Heart left ventricle (tissue), 16 donors: ENCODE measurements at regions of chr1 and their contacts with region 1.

Region 1: DNA sequence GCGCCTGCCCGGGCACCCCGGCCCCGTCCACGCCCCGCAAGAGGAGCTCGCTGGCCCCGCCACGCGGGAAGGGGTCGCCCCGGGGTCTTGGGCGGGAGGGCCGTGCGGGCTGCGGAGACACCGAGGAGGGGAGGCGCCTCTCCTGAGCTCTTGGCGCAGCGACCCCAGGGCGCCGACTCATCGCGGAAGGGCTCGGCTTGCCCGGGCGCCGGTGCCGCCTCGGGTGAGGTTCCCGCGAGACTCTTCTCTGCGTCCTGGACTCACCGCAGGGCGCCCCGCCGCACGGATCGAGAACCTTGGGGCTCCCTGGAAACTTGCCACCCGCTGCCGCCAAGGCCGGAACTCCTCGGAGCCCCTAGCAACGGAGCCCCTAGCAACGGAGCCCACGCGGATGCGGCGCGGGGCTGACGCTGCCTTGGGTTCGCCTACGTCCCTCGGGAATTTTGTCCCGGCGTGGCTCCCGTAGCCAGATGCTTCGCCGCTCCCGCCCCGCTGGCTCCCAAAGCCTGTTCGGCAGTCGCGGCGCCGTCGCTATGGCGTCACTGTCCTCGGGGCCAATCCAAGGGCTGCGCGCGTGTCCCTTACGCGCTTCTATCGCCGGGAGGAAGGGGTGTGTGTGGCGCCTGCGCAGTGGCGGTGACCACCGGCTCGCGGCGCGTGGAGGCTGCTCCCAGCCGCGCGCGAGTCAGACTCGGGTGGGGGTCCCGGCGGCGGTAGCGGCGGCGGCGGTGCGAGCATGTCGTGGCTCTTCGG is at the start of gene ATAD3A:
- DNase-seq: peak; percentile 99
- ATAC-seq: peak; percentile 96 to 99 (median 96)
- H3K4me3 ChIP-seq: peak within 1 kb of the TSS; percentile 59 to 99 (median 79)
- H3K27ac ChIP-seq: peak within 1 kb of the TSS; percentile 68 to 97 (median 88)
- H3K4me1 ChIP-seq: peaks cover 0 to 20% (median 7%) of the 10 kb centered on the region in 12 donors
- H3K27me3 ChIP-seq: no peaks in the 10 kb centered on the region
- CTCF ChIP-seq: no peak
- POLR2A ChIP-seq: peak in 1 of 2 donors; percentile 78
- total RNA-seq, gene ATAD3A: 11.3 to 25.3 (median 18.1) TPM

Region 2: DNA sequence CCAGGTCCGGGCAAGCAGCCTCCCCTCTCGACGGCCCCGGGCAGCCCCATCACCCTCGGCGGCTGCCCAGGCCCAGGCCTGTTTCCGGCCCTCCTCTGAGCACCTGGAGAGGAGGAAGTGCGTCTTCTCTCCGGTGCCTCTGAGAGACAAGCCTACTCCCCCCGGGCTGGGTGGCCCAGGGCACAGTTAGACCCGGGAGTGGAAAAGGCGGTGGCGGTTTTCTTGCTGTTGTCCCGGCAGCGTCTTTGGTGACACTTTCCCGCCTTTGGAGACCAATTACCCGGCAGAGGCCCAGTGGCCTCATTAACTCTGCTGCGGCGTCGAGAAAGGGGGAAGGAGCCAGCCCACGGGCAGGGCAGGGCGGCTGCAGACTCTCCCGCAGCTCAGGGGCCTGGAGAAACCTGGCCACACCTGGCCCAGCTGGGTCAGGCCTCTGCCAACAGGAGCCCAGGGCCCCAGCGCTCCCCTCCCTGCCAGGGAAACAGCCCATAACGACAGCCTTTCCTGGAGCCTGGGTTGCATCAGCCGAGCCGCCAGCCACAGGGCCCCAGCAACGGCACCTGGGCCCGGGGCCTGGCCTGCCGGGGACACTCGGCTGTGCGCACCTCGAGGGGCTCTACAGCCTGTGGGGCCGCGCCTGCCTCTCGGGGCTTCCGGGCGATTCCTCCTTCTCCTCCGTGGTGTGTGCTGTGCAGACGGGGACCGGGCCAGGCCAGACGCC is 367.4 kb before region 1 on chr1:
- intact Hi-C with region 1: no loop called
- DNase-seq: no peak
- ATAC-seq: no peak
- H3K4me3 ChIP-seq: no peak overlapping the region
- H3K27ac ChIP-seq: peak overlapping the region in 1 of 12 donors; percentile 62
- H3K4me1 ChIP-seq: peaks cover 0 to 6% (median 0%) of the 10 kb centered on the region in 12 donors
- H3K27me3 ChIP-seq: peaks cover 0 to 19% (median 11%) of the 10 kb centered on the region in 9 donors
- CTCF ChIP-seq: no peak
- POLR2A ChIP-seq: no peak

Region 3: DNA sequence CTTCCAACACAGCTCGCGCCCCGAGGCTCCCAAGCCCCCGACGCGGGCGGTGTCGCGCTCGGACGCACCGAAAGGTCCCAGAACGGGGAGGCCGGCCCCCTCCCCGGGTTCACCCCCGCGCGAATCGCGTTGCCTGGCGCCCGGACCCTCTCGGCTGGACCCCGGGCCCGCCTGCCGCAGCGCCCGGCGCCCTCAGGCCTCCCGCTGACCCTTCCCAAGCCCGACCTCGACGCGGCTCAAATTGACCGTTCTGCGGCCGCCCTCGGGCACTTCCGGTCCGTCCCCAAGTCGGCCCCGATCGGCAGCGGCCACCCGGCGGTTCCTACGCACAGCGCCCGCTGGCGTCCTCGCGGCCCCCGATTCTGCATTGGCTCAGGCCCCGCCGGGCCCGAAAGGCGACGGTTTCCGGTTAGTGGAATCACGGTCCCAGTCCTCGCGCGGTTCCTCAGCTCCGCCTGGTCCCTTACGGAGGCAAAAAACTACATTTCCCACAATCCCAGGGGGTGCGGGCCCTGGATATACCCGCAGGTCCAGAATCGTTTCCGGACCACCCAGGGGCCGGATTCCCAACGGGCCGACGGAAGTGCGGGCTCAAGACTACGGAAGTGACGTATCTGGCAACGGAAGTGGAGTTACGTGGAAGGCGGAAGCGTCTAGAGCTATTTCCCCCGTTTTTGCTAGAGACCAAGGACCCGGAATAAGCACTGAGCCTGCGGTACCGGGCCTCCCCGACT is 136.6 kb before region 1 on chr1 and contains the start of gene AURKAIP1:
- intact Hi-C with region 1: loop called in 5 of 10 experiments (anchors 10 kb)
- DNase-seq: peak; percentile 98 to 99 (median 99)
- ATAC-seq: peak; percentile 95 to 98 (median 96)
- H3K4me3 ChIP-seq: peak within 1 kb of the TSS; percentile 78 to 100 (median 94)
- H3K27ac ChIP-seq: peak within 1 kb of the TSS; percentile 82 to 99 (median 96)
- H3K4me1 ChIP-seq: peaks cover 10 to 42% (median 33%) of the 10 kb centered on the region in 12 donors
- H3K27me3 ChIP-seq: no peaks in the 10 kb centered on the region
- CTCF ChIP-seq: peak in 6 of 12 donors; percentile 17 to 62 (median 34)
- POLR2A ChIP-seq: peak; percentile 12 to 76
- total RNA-seq, gene AURKAIP1: 157 to 273 (median 188) TPM

Region 4: DNA sequence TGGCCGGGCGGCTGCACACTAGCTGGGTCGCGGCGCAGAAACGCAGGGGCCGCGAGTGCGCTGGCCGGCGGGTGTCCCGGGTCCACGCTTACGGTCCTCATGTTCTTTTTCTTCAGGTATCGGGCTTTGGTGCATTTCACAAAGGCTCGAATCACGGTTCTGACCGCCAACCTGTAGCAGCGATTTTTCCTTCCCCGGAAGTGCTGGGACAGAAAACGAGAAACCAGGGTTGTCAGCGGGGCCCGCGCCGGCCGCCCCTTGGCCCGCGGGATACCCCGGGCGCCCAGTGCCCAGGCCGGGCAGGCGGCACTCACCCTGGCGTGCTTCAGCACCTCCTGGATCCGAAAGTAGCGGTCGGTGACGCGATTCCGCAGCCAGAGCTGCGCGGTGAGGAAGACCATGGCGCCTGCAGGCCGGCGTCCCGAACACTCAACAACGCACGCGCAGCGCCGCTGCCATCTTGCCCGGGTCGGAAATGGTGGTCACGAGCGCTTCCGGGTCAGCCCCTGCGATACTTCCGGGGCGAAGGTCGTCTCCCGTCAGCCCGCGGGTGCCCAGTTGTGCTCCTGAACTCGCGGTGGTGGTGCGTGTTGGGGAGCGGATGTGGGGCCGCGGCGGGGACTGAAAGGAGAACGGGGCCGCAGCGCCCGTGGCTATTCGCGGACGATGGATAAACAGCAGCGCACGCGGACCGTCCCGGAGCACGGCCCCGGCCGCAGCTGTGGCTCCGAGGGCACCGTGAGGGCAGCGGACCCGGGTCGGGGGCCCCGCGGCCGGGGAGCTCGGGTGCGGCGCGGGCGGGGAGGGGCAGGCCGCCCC is 104.7 kb before region 1 on chr1 and contains the start of gene MRPL20:
- intact Hi-C with region 1: loop called in 3 of 10 experiments (anchors 10 kb)
- DNase-seq: peak; percentile 94 to 97 (median 96)
- ATAC-seq: peak; percentile 92 to 100 (median 98)
- H3K4me3 ChIP-seq: peak within 1 kb of the TSS; percentile 61 to 100 (median 94)
- H3K27ac ChIP-seq: peak within 1 kb of the TSS; percentile 72 to 94 (median 88)
- H3K4me1 ChIP-seq: peaks cover 5 to 43% (median 33%) of the 10 kb centered on the region in 12 donors
- H3K27me3 ChIP-seq: no peaks in the 10 kb centered on the region
- CTCF ChIP-seq: no peak
- POLR2A ChIP-seq: peak in 1 of 2 donors; percentile 71
- total RNA-seq, gene MRPL20: 112 to 208 (median 128) TPM

Region 5: DNA sequence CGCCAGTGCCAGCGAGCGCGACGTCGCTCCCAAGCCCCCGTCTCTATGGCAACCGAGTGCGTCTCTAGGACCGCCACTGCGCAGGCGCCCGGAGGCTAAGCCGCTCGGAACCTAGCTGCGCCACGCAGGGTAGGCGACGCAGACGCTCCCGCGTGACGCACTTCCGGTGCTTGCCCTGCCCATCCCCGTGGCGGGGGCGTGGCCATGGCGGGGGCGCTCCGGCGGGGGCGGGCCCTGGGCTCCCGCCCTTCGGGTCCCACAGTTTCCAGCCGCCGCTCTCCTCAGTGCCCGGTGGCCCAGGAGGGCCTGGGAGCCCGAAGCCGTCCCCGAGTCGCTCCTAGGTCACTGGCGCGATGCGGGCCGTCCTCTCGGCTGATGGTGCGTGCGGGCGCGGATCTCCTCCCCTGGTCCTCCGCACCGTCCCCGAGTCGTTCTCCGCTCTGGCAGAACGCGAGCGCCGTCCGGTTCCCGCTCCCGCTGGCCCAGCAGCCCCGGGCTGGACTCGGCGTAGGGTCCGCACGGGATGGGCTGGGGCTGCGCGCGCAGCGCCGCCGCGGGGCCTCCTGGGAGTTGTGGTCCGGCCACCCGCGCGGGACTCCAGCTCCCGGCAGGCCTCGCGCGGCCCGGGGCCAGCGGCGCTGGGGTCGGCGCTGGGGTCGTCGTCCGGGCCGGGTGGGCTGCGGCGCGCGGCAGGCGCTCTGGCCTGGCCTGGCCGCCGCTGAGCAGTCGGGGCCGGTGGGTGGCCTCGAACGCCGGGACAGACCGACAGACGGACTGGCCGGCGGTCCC is 103.7 kb after region 1 on chr1 and contains the start of gene MIB2:
- intact Hi-C with region 1: loop called in 1 of 10 experiments (anchors 10 kb)
- DNase-seq: peak; percentile 96 to 99 (median 97)
- ATAC-seq: peak; percentile 91 to 95 (median 94)
- H3K4me3 ChIP-seq: peak within 1 kb of the TSS; percentile 81 to 100 (median 97)
- H3K27ac ChIP-seq: peak within 1 kb of the TSS; percentile 99 to 100 (median 100)
- H3K4me1 ChIP-seq: peaks cover 4 to 49% (median 32%) of the 10 kb centered on the region in 12 donors
- H3K27me3 ChIP-seq: no peaks in the 10 kb centered on the region
- CTCF ChIP-seq: no peak
- POLR2A ChIP-seq: peak in 1 of 2 donors; percentile 84
- total RNA-seq, gene MIB2: 59.2 to 114 (median 76.3) TPM